GM18951 (cell line): ENCODE measurements at regions of chr12 and their contacts with region 1.

Region 1: GRCh38 chr12:94710933-94711332 is 60.6 kb upstream of the TMCC3 start:
- POLR2A ChIP-seq: no peak

Region 2: GRCh38 chr12:93390549-93391297 is 1320.2 kb before region 1 on chr12:
- in situ Hi-C with region 1: no loop called
- POLR2A ChIP-seq: no peak

Region 3: GRCh38 chr12:94133964-94134795 is 576.8 kb before region 1 on chr12:
- in situ Hi-C with region 1: loop called (anchors 25 kb)
- POLR2A ChIP-seq: no peak

Region 4: DNA sequence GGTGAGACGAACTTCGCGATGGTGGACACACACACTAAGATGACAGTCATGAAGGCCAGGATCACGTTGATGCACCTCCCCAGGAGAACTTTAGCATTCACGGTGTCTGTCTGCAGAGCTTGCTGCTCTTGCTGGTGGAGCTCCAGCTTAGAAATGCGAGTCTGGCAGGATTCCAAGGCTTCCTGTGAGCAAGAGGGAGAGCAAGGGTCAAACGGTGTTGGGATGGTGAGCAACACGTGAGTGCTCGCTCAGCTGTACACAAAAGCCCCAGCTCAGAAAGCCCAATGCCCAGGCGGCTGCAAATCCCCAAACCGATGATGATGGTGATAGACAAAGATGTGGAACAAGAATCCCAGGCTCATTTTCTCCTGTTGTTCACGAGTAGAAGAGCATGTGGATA is 139.4 kb before region 1 on chr12:
- in situ Hi-C with region 1: no loop called
- POLR2A ChIP-seq: no peak